Activated CD4-positive, alpha-beta T cell treated with anti-CD3 and anti-CD28 coated beads for 36 hours (primary cell): ENCODE measurements at regions of chr10 and their contacts with region 1.

Region 1: GRCh38 chr10:6088721-6089390 is at the start of gene RBM17:
- DNase-seq: peak; percentile 98
- ATAC-seq: peak; percentile 70
- H3K4me3 Mint-ChIP-seq: peak within 1 kb of the TSS; percentile 90
- H3K27ac Mint-ChIP-seq: peak within 1 kb of the TSS; percentile 78
- H3K4me1 Mint-ChIP-seq: peaks cover 73% of the 10 kb centered on the region
- H3K27me3 Mint-ChIP-seq: no peaks in the 10 kb centered on the region
- total RNA-seq, gene RBM17: 206 to 246 TPM

Region 2: DNA sequence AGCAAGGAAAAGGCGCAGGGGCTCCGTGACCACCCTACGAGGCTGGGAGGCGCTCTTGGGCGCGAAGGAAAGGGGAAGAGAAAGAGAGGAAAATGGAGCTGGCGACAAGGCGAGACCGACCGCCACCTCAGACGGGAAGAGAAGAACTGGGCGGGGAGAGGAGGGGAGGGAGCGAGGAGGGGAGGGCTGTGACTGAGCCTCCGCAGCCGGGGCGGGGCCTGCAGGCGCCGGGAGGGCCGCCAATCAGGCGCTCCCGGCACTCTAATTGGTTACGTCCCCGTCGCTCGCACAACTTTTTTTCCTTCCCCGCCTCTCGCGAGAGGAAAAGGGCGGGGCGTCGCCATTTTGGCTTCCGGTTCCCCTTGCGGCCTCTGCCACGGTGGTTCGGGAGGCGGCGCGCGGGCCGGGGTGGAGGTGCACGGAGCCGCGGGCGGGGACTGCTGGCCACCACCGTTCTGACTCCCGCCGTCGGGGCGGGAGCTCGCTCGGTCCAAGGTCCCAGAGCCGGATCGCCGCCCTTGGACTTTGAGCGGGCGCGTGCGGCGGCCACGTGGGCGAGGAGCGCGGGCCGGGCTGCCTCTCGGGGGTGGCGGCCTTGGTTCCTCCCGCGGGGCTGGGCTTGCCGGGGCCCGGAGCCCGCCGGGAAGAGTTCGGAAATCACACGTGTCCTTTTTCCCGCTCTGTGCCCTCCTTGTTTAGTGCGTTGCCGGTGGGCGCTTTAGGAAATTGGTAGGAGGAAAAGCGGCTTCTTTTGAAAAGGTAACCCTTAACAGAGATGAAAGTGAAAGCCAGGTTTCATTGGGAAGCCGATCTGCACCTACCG is 275.4 kb before region 1 on chr10 and contains the start of gene GDI2:
- CTCF ChIA-PET with region 1: interaction called, 3 read pairs
- POLR2A ChIA-PET with region 1: interaction called, 4 read pairs
- intact Hi-C with region 1: loop called (anchors 1 to 10 kb)
- DNase-seq: peak; percentile 98
- ATAC-seq: peak; percentile 94
- H3K4me3 Mint-ChIP-seq: peak within 1 kb of the TSS; percentile 92
- H3K27ac Mint-ChIP-seq: peak within 1 kb of the TSS; percentile 98
- H3K4me1 Mint-ChIP-seq: peaks cover 60% of the 10 kb centered on the region
- H3K27me3 Mint-ChIP-seq: no peaks in the 10 kb centered on the region
- total RNA-seq, gene GDI2: 276 to 290 TPM

Region 3: DNA sequence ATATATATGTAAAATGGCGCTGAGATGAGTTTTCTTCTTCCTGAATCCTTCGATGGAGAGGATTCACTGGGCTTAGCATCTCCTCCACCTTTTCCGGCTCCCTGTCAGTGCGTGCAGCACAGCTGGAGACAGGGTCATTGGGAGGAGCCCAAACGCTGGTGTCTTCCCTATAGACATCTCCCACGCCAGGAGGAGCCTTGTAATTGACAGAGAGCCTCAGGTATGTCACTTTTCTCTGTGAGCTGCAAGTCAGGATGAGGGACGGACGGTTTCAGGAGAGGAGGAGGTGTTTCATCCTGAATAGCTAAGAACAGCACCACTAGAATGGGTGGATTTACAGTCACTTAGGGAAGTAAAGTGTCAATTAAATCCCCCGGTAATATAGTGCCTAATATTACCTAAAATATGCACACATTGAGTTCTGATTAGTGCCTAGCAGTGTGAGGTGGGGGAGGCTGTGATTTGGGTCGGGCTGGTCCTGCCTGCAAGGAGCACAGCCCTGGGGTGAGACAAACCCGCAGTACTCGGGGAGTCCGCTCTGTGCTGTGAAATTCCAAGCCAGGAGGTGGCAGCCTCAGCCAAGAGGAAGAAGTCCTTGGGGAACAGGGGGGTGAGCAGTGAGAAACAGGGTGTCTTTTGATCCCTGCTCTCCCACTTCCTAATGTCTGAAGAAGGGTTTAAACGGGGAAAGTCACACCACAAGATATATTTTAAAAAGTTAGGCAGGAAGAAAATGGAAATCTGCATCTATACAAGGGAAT is 139.7 kb before region 1 on chr10:
- CTCF ChIA-PET with region 1: no interaction called
- POLR2A ChIA-PET with region 1: no interaction called
- intact Hi-C with region 1: loop called in 1 of 2 experiments (anchors 1 kb)
- DNase-seq: peak; percentile 66
- ATAC-seq: peak; percentile 79
- H3K4me3 Mint-ChIP-seq: no peak overlapping the region
- H3K27ac Mint-ChIP-seq: no peak overlapping the region
- H3K4me1 Mint-ChIP-seq: peaks cover 7% of the 10 kb centered on the region
- H3K27me3 Mint-ChIP-seq: no peaks in the 10 kb centered on the region

Region 4: DNA sequence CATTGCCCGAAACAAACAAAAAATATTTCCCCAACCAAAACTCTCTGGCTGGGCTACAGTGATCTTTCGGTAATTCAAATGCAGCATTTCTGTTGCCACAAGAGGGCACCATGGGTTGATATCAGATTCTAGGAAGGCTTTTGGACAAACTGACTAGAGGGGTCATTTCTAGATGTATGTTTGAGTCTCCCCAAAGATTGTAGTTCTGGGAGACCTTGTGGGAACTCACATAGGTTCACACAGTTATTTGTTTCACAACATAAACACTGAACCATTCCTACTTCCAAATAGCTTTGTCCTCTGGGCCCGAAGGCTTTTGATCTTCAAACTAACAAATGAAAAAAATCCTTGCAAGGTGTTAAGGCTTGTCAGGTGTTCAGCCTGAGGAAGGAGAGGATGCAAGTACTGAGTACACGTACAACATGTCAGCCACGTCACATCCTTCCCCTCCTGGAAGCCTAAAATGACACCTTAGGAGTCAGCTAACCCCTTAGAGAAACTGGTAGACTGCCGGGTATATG is 74.6 kb before region 1 on chr10:
- CTCF ChIA-PET with region 1: interaction called, 11 read pairs
- POLR2A ChIA-PET with region 1: no interaction called
- intact Hi-C with region 1: loop called (anchors 1 to 2 kb)
- DNase-seq: peak; percentile 79
- ATAC-seq: peak; percentile 76
- H3K4me3 Mint-ChIP-seq: peak overlapping the region; percentile 14
- H3K27ac Mint-ChIP-seq: peak overlapping the region; percentile 87
- H3K4me1 Mint-ChIP-seq: peaks cover 67% of the 10 kb centered on the region
- H3K27me3 Mint-ChIP-seq: no peaks in the 10 kb centered on the region

Region 5: DNA sequence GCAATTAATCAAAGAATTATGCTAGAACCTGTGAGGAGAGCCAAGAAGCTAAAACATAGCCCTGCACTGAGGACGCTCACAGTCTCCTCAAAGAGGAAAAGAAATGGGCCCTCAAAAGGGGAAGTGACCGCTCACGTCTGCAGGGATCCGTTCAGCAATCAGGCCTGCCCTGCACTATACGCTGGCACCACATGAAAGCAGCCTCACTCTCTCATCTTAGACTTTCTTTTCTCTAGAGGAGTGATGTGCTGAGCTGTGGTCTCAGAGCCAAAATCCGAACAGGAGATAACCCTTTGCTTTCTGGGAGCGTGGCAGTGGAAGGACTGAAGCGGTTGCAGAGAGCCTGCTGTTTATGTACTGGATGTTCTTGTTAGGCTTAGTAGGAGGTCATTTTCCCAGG is 20.4 kb before region 1 on chr10:
- CTCF ChIA-PET with region 1: interaction called, 60 read pairs
- POLR2A ChIA-PET with region 1: interaction called, 33 read pairs
- intact Hi-C with region 1: no loop called
- DNase-seq: peak; percentile 64
- ATAC-seq: peak; percentile 23
- H3K4me3 Mint-ChIP-seq: peak overlapping the region; percentile 65
- H3K27ac Mint-ChIP-seq: peak overlapping the region; percentile 95
- H3K4me1 Mint-ChIP-seq: peaks cover 90% of the 10 kb centered on the region
- H3K27me3 Mint-ChIP-seq: peaks cover 3% of the 10 kb centered on the region

Region 6: DNA sequence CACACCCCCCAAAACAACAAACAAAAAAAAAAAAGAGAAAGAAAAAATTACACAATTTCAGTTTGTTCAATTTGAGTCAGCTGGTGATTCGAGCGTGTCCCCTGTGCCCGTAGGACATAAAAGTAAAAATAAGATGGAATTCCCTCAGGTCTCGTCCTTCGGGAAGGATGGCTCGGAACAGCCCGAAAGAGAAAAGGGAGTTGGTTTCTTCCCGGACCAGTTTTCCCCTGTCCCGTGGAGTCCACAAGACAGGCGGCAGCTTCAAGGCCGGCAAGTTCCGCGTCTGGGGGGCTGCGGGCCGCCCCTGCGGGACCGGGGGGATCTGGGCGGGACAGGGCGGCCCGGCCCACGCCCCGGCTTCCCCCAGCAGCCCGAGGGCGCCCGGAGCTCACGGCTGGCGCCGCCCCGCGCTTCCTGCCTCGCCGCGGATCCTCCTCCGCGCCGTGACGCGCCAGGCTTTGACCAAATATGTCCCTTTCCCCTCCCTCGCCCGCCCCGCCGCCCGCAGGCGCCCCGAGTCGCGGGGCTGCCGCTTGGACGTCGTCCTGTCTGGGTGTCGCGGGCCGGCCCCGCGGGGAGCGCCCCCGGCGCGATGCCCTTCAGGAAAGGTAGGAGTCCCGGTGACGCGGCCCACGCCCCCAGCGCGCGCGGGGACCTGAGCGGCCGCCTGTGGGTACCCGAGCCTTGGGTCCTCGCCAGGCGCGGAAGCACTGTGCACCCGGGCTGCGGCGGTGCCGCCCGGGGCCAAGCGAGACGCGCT is 55.7 kb after region 1 on chr10:
- CTCF ChIA-PET with region 1: interaction called, 4 read pairs
- POLR2A ChIA-PET with region 1: no interaction called
- intact Hi-C with region 1: loop called in 1 of 2 experiments (anchors 1 kb)
- DNase-seq: peak; percentile 94
- ATAC-seq: peak; percentile 71
- H3K4me3 Mint-ChIP-seq: peak overlapping the region; percentile 81
- H3K27ac Mint-ChIP-seq: peak overlapping the region; percentile 90
- H3K4me1 Mint-ChIP-seq: peaks cover 79% of the 10 kb centered on the region
- H3K27me3 Mint-ChIP-seq: no peaks in the 10 kb centered on the region